Aorta (tissue), 5 donors: ENCODE measurements at regions of chr14 and their contacts with region 1.

Region 1: DNA sequence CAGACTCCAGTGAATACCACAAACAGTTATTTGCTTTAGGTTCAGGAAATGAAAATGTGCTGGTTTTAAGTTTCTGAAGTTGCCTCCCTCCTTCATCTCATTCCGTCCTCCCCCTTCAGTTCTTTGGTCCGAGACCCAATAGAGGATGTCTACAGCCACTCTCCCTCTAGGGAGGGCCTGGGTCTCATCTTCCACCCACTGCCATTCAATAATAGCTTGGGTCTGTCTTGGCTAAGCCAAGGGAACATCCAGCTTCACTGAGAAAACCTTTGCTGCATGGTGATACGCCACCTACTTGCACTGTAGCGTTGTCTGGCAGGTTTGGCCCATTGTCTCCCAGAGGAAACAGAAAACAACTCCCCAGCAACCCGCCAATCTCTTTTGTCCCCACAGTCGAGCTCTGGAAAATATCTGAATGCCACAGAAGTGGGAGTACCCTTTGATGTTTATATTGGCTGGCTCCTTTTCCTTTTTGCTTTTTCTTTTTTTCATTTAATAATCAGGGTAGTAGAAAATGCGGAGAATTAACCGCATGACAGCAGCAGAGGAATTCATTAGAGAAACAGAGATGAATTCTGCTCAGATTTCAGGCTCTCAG is 380.1 kb downstream of the RAD51B start:
- DNase-seq: no peak
- ATAC-seq: peak; percentile 68
- H3K4me3 ChIP-seq: peak overlapping the region in 1 of 2 donors; percentile 48
- H3K27ac ChIP-seq: peak overlapping the region in 1 of 2 donors; percentile 80
- H3K4me1 ChIP-seq: peaks cover 5 to 6% of the 10 kb centered on the region in 2 donors
- H3K27me3 ChIP-seq: no peaks in the 10 kb centered on the region

Region 2: DNA sequence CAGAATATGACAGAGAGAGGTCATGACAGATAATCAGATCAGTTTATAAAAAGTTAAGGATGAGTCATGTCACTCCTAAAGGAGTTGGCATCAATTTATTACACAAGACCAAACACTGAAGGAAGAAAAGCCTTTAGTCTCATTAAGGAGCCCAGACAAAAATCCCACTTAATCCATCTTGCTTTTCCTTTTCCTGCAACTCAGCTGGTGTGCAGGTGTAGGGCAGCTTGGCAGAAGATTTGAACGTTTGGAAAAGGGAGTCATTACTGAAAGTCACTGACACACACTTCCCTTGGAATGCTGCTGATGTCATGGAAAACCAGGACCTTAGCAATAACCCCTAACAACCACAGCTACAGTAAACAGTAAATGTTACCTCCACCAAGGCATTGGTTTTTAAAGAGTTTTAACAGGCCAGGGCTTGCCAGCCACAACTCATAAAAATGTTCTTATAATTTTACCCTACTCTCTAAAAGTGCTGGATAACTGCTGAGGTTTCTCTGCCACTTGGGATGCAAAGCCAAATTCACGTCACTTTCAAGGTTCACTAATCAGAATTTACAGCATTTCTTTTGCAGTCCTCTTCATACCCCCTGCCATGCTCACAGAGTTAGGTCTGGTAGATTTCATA is 59.4 kb before region 1 on chr14:
- intact Hi-C with region 1: loop called in 1 of 2 experiments (anchors 10 kb)
- DNase-seq: peak in 1 of 2 donors; percentile 46
- ATAC-seq: peak; percentile 59
- H3K4me3 ChIP-seq: no peak overlapping the region
- H3K27ac ChIP-seq: peak overlapping the region; percentile 51 to 90
- H3K4me1 ChIP-seq: peaks cover 2 to 10% of the 10 kb centered on the region in 2 donors
- H3K27me3 ChIP-seq: peaks cover 0 to 2% of the 10 kb centered on the region in 2 donors

Region 3: GRCh38 chr14:68239988-68240771 is 40.5 kb after region 1 on chr14:
- intact Hi-C with region 1: no loop called
- DNase-seq: no peak
- ATAC-seq: no peak
- H3K4me3 ChIP-seq: no peak overlapping the region
- H3K27ac ChIP-seq: no peak overlapping the region
- H3K4me1 ChIP-seq: peaks cover 0 to 7% of the 10 kb centered on the region in 2 donors
- H3K27me3 ChIP-seq: no peaks in the 10 kb centered on the region